ENCODE measurements at regions of chr17 and their contacts with region 1.

Region 1: DNA sequence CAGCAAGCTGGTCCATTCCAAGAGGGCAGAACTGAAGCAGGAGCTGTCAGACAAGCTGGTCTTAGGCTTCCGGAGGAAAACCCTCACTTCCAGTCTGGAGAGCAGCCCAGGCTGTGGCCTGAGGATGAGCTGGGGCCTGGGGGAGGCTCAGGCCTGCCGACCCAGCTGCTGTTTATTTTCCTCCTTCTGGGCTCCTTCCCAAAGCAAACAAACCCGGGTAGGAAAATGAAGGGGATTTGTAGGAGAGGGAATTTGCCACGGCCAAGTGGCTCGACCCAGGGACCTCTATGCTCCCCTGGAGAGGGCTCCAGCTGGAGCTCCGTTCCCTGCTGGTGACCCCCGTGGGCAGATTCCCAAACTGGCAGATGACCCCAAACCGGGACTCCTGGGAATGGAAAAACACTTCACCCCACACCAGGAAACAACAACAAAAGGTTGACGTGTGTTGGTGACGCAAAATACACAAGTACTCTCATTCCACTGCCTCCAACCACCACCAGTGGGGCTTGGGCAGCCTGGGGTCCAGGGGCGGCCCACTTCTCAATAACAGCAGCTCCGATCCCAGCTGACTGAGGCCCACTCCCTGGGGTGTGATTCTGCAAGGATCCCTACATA is 8.8 kb downstream of the JUP start:
- H3K4me3 ChIP-seq: no peak overlapping the region
- H3K27ac ChIP-seq: peak overlapping the region; percentile 78
- H3K4me1 ChIP-seq: peaks cover 14% of the 10 kb centered on the region
- CTCF ChIP-seq: no peak

Region 2: DNA sequence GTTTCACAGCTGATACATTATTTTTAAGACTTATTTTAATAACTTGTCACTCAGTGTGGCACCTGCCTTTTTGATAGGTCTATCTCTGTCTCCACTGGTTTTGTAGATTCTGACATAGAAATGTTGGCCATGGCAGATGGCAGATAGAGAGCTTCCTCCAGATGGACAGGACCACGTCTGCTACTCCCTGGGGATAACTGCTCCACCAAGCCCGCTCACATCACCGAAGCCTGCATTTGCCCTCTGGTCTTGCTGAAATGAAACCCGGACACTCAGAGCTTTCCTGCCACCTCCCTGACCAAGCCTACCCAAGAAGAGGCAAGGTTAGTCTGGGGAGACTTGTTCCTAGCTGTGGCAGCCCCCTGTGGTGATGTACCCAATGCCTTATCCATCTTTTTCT is 26.8 kb before region 1 on chr17:
- CTCF ChIA-PET with region 1: interaction called, 4 read pairs
- POLR2A ChIA-PET with region 1: interaction called, 13 read pairs
- H3K4me3 ChIP-seq: no peak overlapping the region
- H3K27ac ChIP-seq: no peak overlapping the region
- H3K4me1 ChIP-seq: no peaks in the 10 kb centered on the region
- CTCF ChIP-seq: no peak